Caco-2 (cell line): ENCODE measurements at regions of chr2 and their contacts with region 1.

Region 1: DNA sequence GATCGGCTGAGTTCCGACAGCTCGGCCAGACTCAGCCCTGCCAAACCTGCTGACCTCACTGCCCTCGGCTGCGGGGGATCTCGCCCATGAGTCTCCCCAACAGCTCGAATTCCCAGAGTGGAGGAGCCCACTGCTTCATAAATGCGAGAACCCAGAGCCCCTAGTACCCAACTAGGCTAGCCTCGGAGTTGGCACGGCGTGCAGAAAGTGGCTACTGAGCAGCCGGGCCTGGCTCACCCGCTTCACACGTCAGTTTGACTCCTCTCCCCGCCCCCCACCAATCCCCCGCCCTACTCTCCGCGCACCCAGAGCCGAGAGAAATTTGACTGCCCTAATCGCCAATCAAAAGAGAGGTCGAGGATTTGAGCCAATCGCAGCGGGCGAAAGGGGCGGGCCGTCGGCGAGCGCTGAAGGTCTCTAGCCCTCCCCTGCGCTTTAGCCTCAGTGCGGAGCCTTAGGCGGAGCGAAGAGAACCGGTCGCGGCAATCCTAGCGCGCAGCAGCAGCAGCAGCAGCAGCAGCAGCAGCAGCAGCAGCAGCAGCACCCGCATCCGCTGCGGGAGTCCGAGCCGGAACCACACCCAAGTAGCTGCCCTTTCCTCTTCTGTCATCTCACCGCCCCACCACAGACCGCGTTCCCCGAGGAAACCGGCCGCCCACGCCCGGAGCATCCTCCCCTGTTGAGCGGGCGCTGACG is at the start of gene GLS:
- DNase-seq: peak; percentile 97
- H3K4me3 ChIP-seq: peak within 1 kb of the TSS; percentile 98
- H3K4me3 Mint-ChIP-seq: peak within 1 kb of the TSS; percentile 97
- H3K27ac Mint-ChIP-seq: peak within 1 kb of the TSS; percentile 94
- H3K4me1 ChIP-seq: peaks cover 12% of the 10 kb centered on the region
- H3K4me1 Mint-ChIP-seq: peaks cover 19% of the 10 kb centered on the region
- H3K27me3 ChIP-seq: no peaks in the 10 kb centered on the region
- H3K27me3 Mint-ChIP-seq: no peaks in the 10 kb centered on the region
- CTCF ChIP-seq: no peak
- total RNA-seq, gene GLS: 107 and 136 TPM in 2 replicates

Region 2: DNA sequence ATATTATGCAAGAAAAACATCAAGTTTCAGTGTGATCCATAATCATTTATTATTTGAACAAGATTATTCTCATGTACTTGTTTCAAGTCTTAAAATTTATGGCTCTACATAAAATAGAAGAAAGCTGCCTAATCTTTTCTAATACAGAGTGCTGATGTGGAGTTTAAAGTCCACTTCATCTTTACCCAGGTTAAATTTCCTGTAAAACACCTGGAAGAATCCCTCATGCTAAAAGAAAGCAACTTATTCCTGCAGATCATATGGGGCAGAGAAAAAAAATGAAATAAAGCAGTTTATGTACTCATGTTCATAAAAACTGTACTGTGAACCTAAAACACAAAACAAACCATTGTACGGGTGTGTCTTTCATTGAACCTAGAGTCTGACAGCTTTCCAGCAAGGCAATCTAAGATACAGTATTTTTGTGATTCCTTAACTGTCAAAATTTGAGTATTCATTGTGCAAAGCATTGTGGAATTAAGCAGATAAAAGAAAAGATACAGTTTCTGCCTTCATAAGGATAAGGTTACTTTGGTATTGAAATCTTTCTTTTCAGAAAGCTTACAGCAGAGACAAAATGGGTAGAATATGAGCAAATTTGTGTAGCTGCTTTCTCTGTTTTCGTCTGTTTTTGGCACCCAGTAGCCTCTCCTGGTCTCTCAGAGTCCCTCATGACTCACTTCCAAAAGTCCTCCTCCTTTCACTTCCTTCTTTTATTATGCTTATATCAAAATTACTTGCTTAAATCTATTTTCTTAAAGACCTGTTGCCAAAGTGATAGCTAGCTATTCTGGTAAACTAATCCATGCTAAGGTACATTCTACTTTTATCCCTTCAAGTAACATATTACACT is 26.8 kb before region 1 on chr2:
- CTCF ChIA-PET with region 1: no interaction called
- POLR2A ChIA-PET with region 1: no interaction called
- intact Hi-C with region 1: loop called (anchors 2 kb)
- DNase-seq: no peak
- H3K4me3 ChIP-seq: no peak overlapping the region
- H3K4me3 Mint-ChIP-seq: no peak overlapping the region
- H3K27ac Mint-ChIP-seq: no peak overlapping the region
- H3K4me1 ChIP-seq: peaks cover 37% of the 10 kb centered on the region
- H3K4me1 Mint-ChIP-seq: peaks cover 34% of the 10 kb centered on the region
- H3K27me3 ChIP-seq: no peaks in the 10 kb centered on the region
- H3K27me3 Mint-ChIP-seq: no peaks in the 10 kb centered on the region
- CTCF ChIP-seq: no peak

Region 3: GRCh38 chr2:190863946-190864345 is 16.6 kb before region 1 on chr2:
- CTCF ChIA-PET with region 1: no interaction called
- POLR2A ChIA-PET with region 1: interaction called, 10 read pairs
- intact Hi-C with region 1: loop called (anchors 1 kb)
- DNase-seq: peak; percentile 62 to 71
- H3K4me3 ChIP-seq: no peak overlapping the region
- H3K4me3 Mint-ChIP-seq: no peak overlapping the region
- H3K27ac Mint-ChIP-seq: no peak overlapping the region
- H3K4me1 ChIP-seq: peaks cover 25% of the 10 kb centered on the region
- H3K4me1 Mint-ChIP-seq: peaks cover 24% of the 10 kb centered on the region
- H3K27me3 ChIP-seq: no peaks in the 10 kb centered on the region
- H3K27me3 Mint-ChIP-seq: no peaks in the 10 kb centered on the region
- CTCF ChIP-seq: no peak

Region 4: GRCh38 chr2:190947711-190948251 is 67.3 kb after region 1 on chr2:
- CTCF ChIA-PET with region 1: no interaction called
- POLR2A ChIA-PET with region 1: interaction called, 8 read pairs
- intact Hi-C with region 1: loop called (anchors 1 kb)
- DNase-seq: peak; percentile 60 to 67
- H3K4me3 ChIP-seq: no peak overlapping the region
- H3K4me3 Mint-ChIP-seq: peak overlapping the region; percentile 15
- H3K27ac Mint-ChIP-seq: no peak overlapping the region
- H3K4me1 ChIP-seq: peaks cover 33% of the 10 kb centered on the region
- H3K4me1 Mint-ChIP-seq: peaks cover 7% of the 10 kb centered on the region
- H3K27me3 ChIP-seq: no peaks in the 10 kb centered on the region
- H3K27me3 Mint-ChIP-seq: no peaks in the 10 kb centered on the region
- CTCF ChIP-seq: no peak

Region 5: GRCh38 chr2:191013932-191014652 is 133.6 kb after region 1 on chr2 and contains the start of gene STAT1:
- CTCF ChIA-PET with region 1: no interaction called
- POLR2A ChIA-PET with region 1: no interaction called
- intact Hi-C with region 1: loop called (anchors 5 kb)
- DNase-seq: peak; percentile 90 to 98
- H3K4me3 ChIP-seq: peak within 1 kb of the TSS; percentile 72
- H3K4me3 Mint-ChIP-seq: no peak within 1 kb of the TSS
- H3K27ac Mint-ChIP-seq: no peak within 1 kb of the TSS
- H3K4me1 ChIP-seq: peaks cover 14% of the 10 kb centered on the region
- H3K4me1 Mint-ChIP-seq: no peaks in the 10 kb centered on the region
- H3K27me3 ChIP-seq: no peaks in the 10 kb centered on the region
- H3K27me3 Mint-ChIP-seq: no peaks in the 10 kb centered on the region
- CTCF ChIP-seq: peak; percentile 13 to 23
- total RNA-seq, gene STAT1: 113 and 126 TPM in 2 replicates

Region 6: GRCh38 chr2:191521608-191522208 is 641.2 kb after region 1 on chr2:
- CTCF ChIA-PET with region 1: no interaction called
- POLR2A ChIA-PET with region 1: interaction called, 11 read pairs
- intact Hi-C with region 1: no loop called
- DNase-seq: peak in 1 of 2 experiments; percentile 15
- H3K4me3 ChIP-seq: no peak overlapping the region
- H3K4me3 Mint-ChIP-seq: no peak overlapping the region
- H3K27ac Mint-ChIP-seq: no peak overlapping the region
- H3K4me1 ChIP-seq: no peaks in the 10 kb centered on the region
- H3K4me1 Mint-ChIP-seq: peaks cover 13% of the 10 kb centered on the region
- H3K27me3 ChIP-seq: no peaks in the 10 kb centered on the region
- H3K27me3 Mint-ChIP-seq: no peaks in the 10 kb centered on the region
- CTCF ChIP-seq: peak; percentile 62 to 74